Naive thymus-derived CD4-positive, alpha-beta T cell (primary cell): ENCODE measurements at regions of chr5 and their contacts with region 1.

Region 1: DNA sequence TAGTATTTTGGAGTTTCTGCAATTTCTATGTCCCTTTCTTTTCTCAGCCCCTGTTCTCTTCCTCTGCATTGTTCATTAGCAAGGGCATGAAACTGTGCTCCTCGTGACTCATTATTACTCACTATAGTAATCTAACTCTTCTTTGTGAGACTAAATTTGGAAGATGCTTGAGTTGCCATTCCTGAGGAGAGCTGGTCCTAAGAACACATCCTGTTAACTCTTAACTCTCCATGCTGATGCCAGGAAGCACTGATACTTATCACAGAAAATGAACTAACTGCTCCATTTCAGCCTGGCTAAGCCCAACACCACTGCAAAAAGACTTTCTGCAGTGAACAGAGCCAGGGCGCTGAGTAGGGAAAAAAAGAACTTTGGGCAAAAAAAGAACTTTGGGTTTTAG is 10.6 kb upstream of the CSNK1A1 start:
- DNase-seq: no peak
- ATAC-seq: no peak
- H3K4me3 ChIP-seq: no peak overlapping the region
- H3K4me3 Mint-ChIP-seq: peak overlapping the region in 8 of 10 donors; percentile 4 to 67 (median 56)
- H3K27ac ChIP-seq: peak overlapping the region; percentile 50
- H3K27ac Mint-ChIP-seq: peak overlapping the region; percentile 57 to 84 (median 74)
- H3K4me1 ChIP-seq: peaks cover 0 to 17% of the 10 kb centered on the region in 2 donors
- H3K4me1 Mint-ChIP-seq: peaks cover 14 to 36% (median 25%) of the 10 kb centered on the region in 7 donors
- H3K27me3 ChIP-seq: no peaks in the 10 kb centered on the region
- H3K27me3 Mint-ChIP-seq: no peaks in the 10 kb centered on the region

Region 2: DNA sequence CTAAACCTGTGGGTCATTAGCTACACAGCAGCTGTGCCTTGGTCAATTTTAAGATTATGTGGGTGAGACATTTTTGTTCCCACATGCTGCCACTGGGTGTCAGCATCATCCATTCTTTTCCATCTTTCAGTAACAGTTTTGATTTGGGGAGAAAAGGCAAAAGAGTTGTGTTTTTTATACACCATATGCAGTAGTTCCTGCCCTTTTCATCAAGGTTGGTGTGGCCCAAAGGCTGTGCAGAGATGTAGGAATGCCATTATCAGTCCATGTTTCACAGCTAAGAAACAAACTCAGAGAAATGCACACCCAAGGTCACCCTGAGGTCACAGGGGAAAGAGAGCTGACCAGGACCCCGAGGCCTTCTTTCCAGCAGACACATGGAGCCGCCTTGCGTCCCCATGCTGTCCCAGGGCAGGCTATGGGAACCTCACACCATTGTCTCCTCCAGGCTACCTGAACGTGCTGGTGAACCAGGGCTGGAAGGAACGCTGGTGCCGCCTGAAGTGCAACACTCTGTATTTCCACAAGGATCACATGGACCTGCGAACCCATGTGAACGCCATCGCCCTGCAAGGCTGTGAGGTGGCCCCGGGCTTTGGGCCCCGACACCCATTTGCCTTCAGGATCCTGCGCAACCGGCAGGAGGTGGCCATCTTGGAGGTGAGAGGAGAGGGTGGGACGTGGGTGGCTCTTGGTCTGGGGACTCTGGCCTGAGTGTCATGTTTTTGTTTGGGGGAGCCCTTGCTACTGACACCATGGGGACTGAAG is 244.4 kb before region 1 on chr5:
- CTCF ChIA-PET with region 1: interaction called, 8 read pairs
- POLR2A ChIA-PET with region 1: interaction called, 3 read pairs
- intact Hi-C with region 1: loop called (anchors 1 to 5 kb)
- DNase-seq: peak in 7 of 9 donors; percentile 18 to 66 (median 57)
- ATAC-seq: peak; percentile 77
- H3K4me3 ChIP-seq: no peak overlapping the region
- H3K4me3 Mint-ChIP-seq: no peak overlapping the region
- H3K27ac ChIP-seq: no peak overlapping the region
- H3K27ac Mint-ChIP-seq: peak overlapping the region in 1 of 9 donors; percentile 4
- H3K4me1 ChIP-seq: peaks cover 0 to 3% of the 10 kb centered on the region in 2 donors
- H3K4me1 Mint-ChIP-seq: peaks cover 0 to 5% (median 4%) of the 10 kb centered on the region in 7 donors
- H3K27me3 ChIP-seq: no peaks in the 10 kb centered on the region
- H3K27me3 Mint-ChIP-seq: no peaks in the 10 kb centered on the region

Region 3: GRCh38 chr5:149381987-149382340 is 179.9 kb before region 1 on chr5:
- CTCF ChIA-PET with region 1: interaction called, 30 read pairs
- POLR2A ChIA-PET with region 1: no interaction called
- intact Hi-C with region 1: loop called (anchors 1 kb)
- DNase-seq: peak; percentile 41 to 76 (median 62)
- ATAC-seq: peak; percentile 85
- H3K4me3 ChIP-seq: no peak overlapping the region
- H3K4me3 Mint-ChIP-seq: peak overlapping the region in 1 of 10 donors; percentile 46
- H3K27ac ChIP-seq: no peak overlapping the region
- H3K27ac Mint-ChIP-seq: no peak overlapping the region
- H3K4me1 ChIP-seq: no peaks in the 10 kb centered on the region
- H3K4me1 Mint-ChIP-seq: peaks cover 0 to 5% (median 4%) of the 10 kb centered on the region in 7 donors
- H3K27me3 ChIP-seq: no peaks in the 10 kb centered on the region
- H3K27me3 Mint-ChIP-seq: no peaks in the 10 kb centered on the region

Region 4: GRCh38 chr5:149442563-149443182 is 119.2 kb before region 1 on chr5:
- CTCF ChIA-PET with region 1: interaction called, 67 read pairs
- POLR2A ChIA-PET with region 1: no interaction called
- intact Hi-C with region 1: loop called (anchors 1 kb)
- DNase-seq: peak; percentile 16 to 82 (median 51)
- ATAC-seq: peak; percentile 81
- H3K4me3 ChIP-seq: no peak overlapping the region
- H3K4me3 Mint-ChIP-seq: no peak overlapping the region
- H3K27ac ChIP-seq: no peak overlapping the region
- H3K27ac Mint-ChIP-seq: peak overlapping the region in 3 of 9 donors; percentile 2 to 52 (median 15)
- H3K4me1 ChIP-seq: no peaks in the 10 kb centered on the region
- H3K4me1 Mint-ChIP-seq: peaks cover 1 to 20% (median 12%) of the 10 kb centered on the region in 7 donors
- H3K27me3 ChIP-seq: no peaks in the 10 kb centered on the region
- H3K27me3 Mint-ChIP-seq: no peaks in the 10 kb centered on the region